ENCODE measurements at regions of chr14 and their contacts with region 1.

Region 1: DNA sequence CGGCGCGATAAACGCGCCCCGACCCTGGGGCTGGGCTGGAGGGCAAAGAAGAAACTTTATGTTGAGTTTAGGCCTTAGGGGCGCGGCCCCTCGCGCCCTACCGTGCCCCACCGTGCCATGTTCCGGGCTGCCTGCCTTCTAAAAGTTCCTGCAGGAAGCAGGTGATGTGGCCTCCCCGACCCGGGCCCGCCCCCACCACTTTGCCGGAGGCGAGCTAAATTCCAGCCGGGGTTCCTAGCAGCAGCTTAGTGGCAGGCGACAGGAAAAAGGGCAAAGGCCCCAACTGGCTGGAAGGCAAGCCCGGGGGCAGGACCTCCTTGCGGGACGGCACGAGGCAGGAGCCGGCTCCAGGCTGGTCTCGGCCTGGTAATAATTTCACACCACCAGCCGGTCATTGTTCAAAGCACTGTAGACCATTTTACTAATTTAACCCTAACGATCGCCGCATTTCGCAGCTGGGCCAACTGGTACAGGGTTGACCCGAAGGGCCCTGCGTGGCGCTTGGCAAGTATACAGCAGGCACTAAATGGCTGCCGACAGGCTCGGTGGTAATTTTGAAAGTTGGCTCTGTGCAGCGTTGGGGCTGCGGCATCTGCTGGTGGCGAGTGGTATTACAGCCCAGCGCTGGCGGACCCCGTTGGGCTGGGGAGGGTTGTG is 895 bp upstream of the CCDC88C start:
- DNase-seq: peak; percentile 88
- ATAC-seq: peak; percentile 20
- H3K4me3 Mint-ChIP-seq: peak overlapping the region; percentile 65
- H3K27ac Mint-ChIP-seq: peak overlapping the region; percentile 82
- H3K4me1 Mint-ChIP-seq: peaks cover 32% of the 10 kb centered on the region
- H3K27me3 Mint-ChIP-seq: no peaks in the 10 kb centered on the region

Region 2: DNA sequence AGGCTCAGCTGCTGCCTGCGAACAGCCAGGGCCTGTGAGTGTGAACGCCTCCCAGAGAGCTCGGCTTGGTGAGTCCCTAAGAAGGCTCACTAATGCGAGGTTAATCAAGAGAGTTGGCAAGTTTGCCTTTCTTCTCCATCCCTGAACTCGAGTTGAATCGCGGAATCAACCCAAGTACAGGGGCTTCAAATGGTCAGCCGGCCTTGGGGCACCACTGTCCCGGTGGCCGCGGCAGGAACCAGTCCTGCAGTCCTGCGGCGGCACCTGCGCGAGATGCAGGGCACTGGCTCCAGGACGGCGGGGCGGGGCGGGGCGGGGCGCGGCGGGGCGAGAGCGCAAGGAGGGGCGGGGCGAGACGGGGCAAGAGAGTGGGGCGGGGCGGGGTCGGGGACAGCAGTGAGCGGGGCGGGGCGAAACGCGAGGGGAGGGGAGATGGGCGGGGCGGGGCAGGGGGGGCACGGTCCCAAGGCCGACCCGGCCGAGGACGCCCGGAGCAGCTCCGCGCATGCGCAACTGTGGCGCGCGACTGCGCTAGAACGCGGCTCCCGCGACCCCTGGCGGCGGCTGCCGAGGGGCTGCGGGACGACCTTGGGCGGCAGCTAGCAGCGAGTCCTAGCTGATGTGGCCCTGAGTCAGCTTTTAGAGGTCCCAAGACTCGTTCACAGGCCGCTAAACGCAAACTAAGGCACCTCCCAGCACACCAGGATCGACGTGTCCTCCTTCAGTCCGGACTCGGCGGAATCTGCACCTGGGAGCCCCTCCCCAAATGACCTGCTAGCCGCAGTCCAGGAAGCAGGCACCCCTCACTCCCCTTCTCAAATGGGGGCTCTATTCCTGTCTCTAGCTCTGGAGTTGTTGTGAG is 660.3 kb before region 1 on chr14:
- CTCF ChIA-PET with region 1: no interaction called
- POLR2A ChIA-PET with region 1: no interaction called
- intact Hi-C with region 1: loop called in 1 of 2 experiments (anchors 5 kb)
- DNase-seq: peak; percentile 97
- ATAC-seq: peak; percentile 93
- H3K4me3 Mint-ChIP-seq: peak overlapping the region; percentile 74
- H3K27ac Mint-ChIP-seq: peak overlapping the region; percentile 79
- H3K4me1 Mint-ChIP-seq: peaks cover 32% of the 10 kb centered on the region
- H3K27me3 Mint-ChIP-seq: peaks cover 2% of the 10 kb centered on the region

Region 3: DNA sequence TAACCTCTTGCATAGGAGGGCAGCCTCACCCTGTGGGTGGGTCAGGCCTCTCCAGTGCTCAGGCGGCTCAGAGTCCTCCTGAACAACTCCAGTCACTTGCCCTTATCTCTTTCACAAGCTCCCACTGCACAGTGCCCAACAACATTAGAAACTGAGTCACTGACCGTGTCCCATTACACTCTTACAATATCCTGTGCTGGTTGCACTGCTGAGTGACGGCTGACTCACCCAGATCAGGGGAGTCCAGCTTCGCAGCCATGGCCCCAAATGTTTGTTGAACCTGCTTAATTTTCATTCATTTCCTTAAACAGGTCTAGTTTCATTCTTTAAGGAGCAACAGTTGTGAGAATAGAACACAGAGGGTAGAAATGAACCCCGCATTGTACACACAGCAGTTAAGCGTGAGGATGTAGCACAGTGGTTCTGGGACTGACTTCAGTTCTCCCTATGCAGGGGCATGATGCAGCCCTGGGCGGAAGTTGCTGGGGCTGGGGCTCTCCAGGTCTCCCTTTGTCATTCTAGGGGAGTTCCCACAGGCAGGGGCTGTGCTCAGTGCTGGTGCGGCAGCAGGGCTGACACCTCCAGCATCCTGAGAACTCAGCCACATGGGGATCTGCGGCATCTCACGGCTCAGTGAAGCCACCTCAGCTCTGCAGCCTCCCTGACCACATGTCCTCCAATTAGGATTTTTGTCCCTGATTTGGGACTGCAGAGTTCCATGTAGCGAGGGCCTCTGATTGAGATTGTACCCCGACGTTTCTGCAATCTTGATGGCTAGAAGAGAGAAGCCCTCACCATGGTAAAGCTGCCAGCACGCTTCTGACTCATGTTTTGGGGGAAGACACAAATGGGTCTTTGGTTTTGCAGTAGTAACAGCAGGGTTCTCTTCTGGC is 190.2 kb before region 1 on chr14:
- CTCF ChIA-PET with region 1: interaction called, 4 read pairs
- POLR2A ChIA-PET with region 1: no interaction called
- intact Hi-C with region 1: loop called (anchors 1 to 2 kb)
- DNase-seq: peak; percentile 95
- ATAC-seq: peak; percentile 87
- H3K4me3 Mint-ChIP-seq: peak overlapping the region; percentile 67
- H3K27ac Mint-ChIP-seq: peak overlapping the region; percentile 100
- H3K4me1 Mint-ChIP-seq: peaks cover 95% of the 10 kb centered on the region
- H3K27me3 Mint-ChIP-seq: no peaks in the 10 kb centered on the region

Region 4: GRCh38 chr14:91292491-91292890 is 126.0 kb before region 1 on chr14:
- CTCF ChIA-PET with region 1: no interaction called
- POLR2A ChIA-PET with region 1: no interaction called
- intact Hi-C with region 1: no loop called
- DNase-seq: no peak
- ATAC-seq: no peak
- H3K4me3 Mint-ChIP-seq: no peak overlapping the region
- H3K27ac Mint-ChIP-seq: peak overlapping the region; percentile 26
- H3K4me1 Mint-ChIP-seq: no peaks in the 10 kb centered on the region
- H3K27me3 Mint-ChIP-seq: no peaks in the 10 kb centered on the region

Region 5: DNA sequence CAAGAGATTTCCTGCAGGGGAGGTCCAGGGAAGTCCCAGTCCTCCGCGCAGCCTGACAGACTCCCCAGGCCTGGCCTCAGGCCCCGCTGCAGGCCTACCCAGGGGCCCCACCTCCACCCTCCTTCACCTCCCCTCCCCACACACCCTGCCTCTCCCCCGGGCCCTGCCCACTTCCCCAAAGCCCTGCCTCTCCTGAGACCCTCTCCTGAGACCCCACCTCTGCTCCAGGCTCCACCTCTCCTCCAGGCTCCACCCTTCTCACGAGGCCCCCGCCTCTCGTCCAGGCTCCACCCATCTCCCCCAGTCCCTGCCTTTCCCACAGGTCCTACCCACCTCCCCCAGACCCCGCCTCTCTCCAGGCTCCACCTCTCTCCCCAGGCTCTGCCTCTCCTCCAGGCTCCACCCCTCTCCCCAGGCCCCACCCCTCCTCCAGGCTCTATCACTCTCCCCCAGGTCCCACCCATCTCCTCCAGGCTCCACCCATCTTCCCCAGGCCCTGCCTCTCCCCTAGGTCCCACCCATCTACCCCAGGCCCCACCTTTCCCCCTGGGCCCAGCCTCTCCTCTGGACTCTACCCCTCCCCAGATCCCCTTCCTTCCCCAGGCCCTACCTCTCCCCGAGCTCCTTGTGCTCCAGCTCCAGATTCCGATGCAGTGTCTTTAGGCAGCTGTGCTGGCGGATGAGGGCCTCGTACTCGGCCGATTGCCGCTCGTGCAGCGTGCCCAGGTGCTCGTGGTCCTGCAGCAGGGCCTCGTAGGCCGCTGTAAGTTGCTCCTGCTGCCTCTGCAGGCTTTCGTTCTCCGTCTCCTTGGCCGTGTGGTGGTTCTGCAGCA is 115.2 kb before region 1 on chr14:
- CTCF ChIA-PET with region 1: interaction called, 3 read pairs
- POLR2A ChIA-PET with region 1: no interaction called
- intact Hi-C with region 1: loop called (anchors 1 to 5 kb)
- DNase-seq: peak; percentile 97
- ATAC-seq: peak; percentile 87
- H3K4me3 Mint-ChIP-seq: peak overlapping the region; percentile 66
- H3K27ac Mint-ChIP-seq: peak overlapping the region; percentile 97
- H3K4me1 Mint-ChIP-seq: peaks cover 63% of the 10 kb centered on the region
- H3K27me3 Mint-ChIP-seq: no peaks in the 10 kb centered on the region

Region 6: DNA sequence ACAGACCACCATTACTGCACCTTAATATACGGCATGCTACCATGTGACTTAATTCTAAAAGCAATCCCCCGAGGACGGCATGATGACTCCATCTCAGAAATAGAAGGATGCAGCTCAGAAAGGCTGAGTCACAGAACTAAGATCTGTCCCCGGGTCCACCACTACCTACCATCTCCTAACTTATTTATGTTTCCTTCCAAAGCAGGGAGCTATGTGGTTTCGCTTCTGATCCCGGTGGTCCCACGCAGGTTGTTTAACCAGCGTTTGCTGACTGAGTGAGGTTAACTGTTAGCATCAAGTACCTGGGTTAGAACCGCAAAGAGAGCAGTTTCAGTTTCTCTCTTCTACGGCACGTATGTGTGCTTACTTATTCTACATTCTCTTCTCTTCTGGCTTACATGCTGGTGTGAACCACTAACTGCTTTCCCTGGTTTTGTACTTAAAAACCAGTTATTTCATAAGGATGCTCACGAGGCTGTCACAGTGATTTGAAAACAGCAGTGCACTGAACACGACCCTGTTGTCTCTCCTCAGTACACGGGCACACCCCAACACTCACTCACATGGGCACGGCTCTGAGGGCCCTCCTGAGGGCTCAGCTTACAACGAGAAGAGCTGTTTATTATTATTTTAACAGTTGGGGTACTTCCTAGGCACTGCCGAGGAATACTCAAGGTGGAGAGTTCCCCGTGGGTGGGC is 67.6 kb before region 1 on chr14:
- CTCF ChIA-PET with region 1: interaction called, 28 read pairs
- POLR2A ChIA-PET with region 1: interaction called, 18 read pairs
- intact Hi-C with region 1: loop called (anchors 1 kb)
- DNase-seq: peak; percentile 81
- ATAC-seq: peak; percentile 59
- H3K4me3 Mint-ChIP-seq: peak overlapping the region; percentile 65
- H3K27ac Mint-ChIP-seq: peak overlapping the region; percentile 92
- H3K4me1 Mint-ChIP-seq: peaks cover 95% of the 10 kb centered on the region
- H3K27me3 Mint-ChIP-seq: no peaks in the 10 kb centered on the region

Region 7: GRCh38 chr14:91510174-91511042 is 91.9 kb after region 1 on chr14 and contains the start of gene PPP4R3A:
- CTCF ChIA-PET with region 1: no interaction called
- POLR2A ChIA-PET with region 1: no interaction called
- intact Hi-C with region 1: loop called (anchors 1 to 5 kb)
- DNase-seq: peak; percentile 97
- ATAC-seq: peak; percentile 88
- H3K4me3 Mint-ChIP-seq: peak within 1 kb of the TSS; percentile 96
- H3K27ac Mint-ChIP-seq: peak within 1 kb of the TSS; percentile 100
- H3K4me1 Mint-ChIP-seq: peaks cover 20% of the 10 kb centered on the region
- H3K27me3 Mint-ChIP-seq: no peaks in the 10 kb centered on the region
- total RNA-seq, gene PPP4R3A: 105 to 122 TPM

Region 8: DNA sequence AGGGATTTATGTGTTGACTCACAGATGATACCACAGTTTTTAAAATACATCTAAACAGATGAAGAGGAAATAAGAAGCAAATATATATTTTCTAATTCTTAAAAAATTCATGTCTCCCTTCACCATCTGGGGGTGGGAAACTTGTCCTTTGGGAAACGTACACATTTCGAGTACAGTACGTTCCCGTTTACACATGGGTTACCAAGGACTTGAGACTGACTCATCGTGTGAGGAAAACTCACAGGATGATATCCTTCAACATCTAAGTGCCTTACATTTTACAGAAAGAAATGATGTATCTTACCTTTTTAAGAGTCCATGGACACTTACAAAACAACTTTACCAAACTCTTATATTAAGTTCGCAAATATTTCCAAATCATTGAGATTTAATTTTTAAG is 545.0 kb after region 1 on chr14:
- CTCF ChIA-PET with region 1: no interaction called
- POLR2A ChIA-PET with region 1: no interaction called
- intact Hi-C with region 1: no loop called
- DNase-seq: no peak
- ATAC-seq: no peak
- H3K4me3 Mint-ChIP-seq: no peak overlapping the region
- H3K27ac Mint-ChIP-seq: no peak overlapping the region
- H3K4me1 Mint-ChIP-seq: peaks cover 41% of the 10 kb centered on the region
- H3K27me3 Mint-ChIP-seq: no peaks in the 10 kb centered on the region

Measured in activated CD4-positive, alpha-beta T cell treated with anti-CD3 and anti-CD28 coated beads for 36 hours (primary cell).